ENCODE measurements at regions of chr6 and their contacts with region 1.

Region 1: DNA sequence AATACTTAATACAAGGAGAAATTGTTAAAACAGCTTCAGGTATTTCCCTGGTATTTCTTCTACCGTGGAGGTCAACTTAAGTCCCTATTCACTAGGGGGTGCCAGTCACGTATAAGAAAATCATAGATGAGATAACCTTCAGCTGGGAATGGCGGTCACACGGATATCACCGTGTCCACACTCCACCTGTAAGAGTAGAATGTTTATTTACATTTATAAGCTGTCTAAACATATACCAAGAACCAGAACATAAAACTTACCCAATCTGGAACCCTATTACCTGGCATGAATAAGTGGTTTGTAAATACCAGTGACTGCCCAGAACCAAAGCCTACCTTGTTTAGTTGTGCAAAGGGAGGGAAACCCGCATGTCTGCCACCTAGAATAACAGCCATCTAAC is 1.9 kb upstream of the ELOVL4 start:
- DNase-seq: peak; percentile 54 to 69 (median 63)
- H3K4me3 ChIP-seq: no peak overlapping the region
- H3K4me3 Mint-ChIP-seq: peak overlapping the region in 5 of 8 donors; percentile 12 to 64 (median 30)
- H3K27ac ChIP-seq: no peak overlapping the region
- H3K27ac Mint-ChIP-seq: peak overlapping the region in 4 of 7 donors; percentile 43 to 86 (median 60)
- H3K4me1 ChIP-seq: peaks cover 36% of the 10 kb centered on the region
- H3K4me1 Mint-ChIP-seq: peaks cover 17 to 38% (median 21%) of the 10 kb centered on the region in 4 donors
- H3K27me3 ChIP-seq: peaks cover 12% of the 10 kb centered on the region
- H3K27me3 Mint-ChIP-seq: peaks cover 12 to 20% of the 10 kb centered on the region in 2 donors

Region 2: DNA sequence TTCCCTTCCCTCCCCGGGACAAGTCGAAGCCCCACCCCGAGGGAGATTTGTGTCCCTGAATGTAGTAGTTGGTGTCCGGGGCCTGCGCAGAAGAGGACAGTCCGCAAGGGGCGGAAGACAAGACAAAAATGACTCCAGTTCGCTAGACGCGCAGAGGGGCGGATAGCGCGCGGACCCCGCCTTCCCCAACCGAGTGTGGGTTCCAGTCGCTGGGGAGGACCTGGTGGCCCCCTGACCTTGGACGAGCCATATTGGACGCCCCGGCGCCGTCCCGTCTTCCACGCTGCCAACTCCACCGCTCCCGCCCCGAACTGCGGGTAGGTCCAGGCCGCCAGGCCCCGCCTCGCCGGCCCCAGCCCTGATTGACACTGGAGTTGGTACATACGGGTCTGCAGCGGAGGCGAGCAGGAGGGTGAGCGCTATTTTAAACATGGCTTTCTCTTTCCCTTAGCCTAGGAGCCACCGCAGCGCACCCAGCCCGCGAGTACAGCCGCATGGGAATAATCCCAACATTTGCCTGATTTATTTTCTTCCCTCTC is 715.6 kb before region 1 on chr6:
- CTCF ChIA-PET with region 1: no interaction called
- POLR2A ChIA-PET with region 1: no interaction called
- intact Hi-C with region 1: loop called (anchors 10 kb)
- DNase-seq: peak; percentile 58 to 71 (median 64)
- H3K4me3 ChIP-seq: peak overlapping the region; percentile 77 to 99
- H3K4me3 Mint-ChIP-seq: peak overlapping the region; percentile 92 to 99 (median 98)
- H3K27ac ChIP-seq: peak overlapping the region; percentile 72
- H3K27ac Mint-ChIP-seq: peak overlapping the region; percentile 85 to 96 (median 92)
- H3K4me1 ChIP-seq: peaks cover 20% of the 10 kb centered on the region
- H3K4me1 Mint-ChIP-seq: peaks cover 14 to 30% (median 16%) of the 10 kb centered on the region in 4 donors
- H3K27me3 ChIP-seq: no peaks in the 10 kb centered on the region
- H3K27me3 Mint-ChIP-seq: no peaks in the 10 kb centered on the region

Region 3: GRCh38 chr6:79964607-79965081 is 15.4 kb after region 1 on chr6:
- CTCF ChIA-PET with region 1: interaction called, 12 read pairs
- POLR2A ChIA-PET with region 1: interaction called, 9 read pairs
- intact Hi-C with region 1: no loop called
- DNase-seq: peak; percentile 54 to 74 (median 70)
- H3K4me3 ChIP-seq: no peak overlapping the region
- H3K4me3 Mint-ChIP-seq: peak overlapping the region in 7 of 8 donors; percentile 9 to 67 (median 47)
- H3K27ac ChIP-seq: no peak overlapping the region
- H3K27ac Mint-ChIP-seq: peak overlapping the region; percentile 76 to 92 (median 85)
- H3K4me1 ChIP-seq: peaks cover 22% of the 10 kb centered on the region
- H3K4me1 Mint-ChIP-seq: peaks cover 3 to 31% (median 13%) of the 10 kb centered on the region in 4 donors
- H3K27me3 ChIP-seq: no peaks in the 10 kb centered on the region
- H3K27me3 Mint-ChIP-seq: peaks cover 7 to 14% of the 10 kb centered on the region in 2 donors

Region 4: GRCh38 chr6:79984261-79984660 is 35.0 kb after region 1 on chr6:
- CTCF ChIA-PET with region 1: interaction called, 38 read pairs
- POLR2A ChIA-PET with region 1: interaction called, 14 read pairs
- intact Hi-C with region 1: loop called (anchors 1 kb)
- DNase-seq: peak; percentile 28 to 50 (median 43)
- H3K4me3 ChIP-seq: no peak overlapping the region
- H3K4me3 Mint-ChIP-seq: peak overlapping the region in 4 of 8 donors; percentile 5 to 33 (median 20)
- H3K27ac ChIP-seq: no peak overlapping the region
- H3K27ac Mint-ChIP-seq: peak overlapping the region; percentile 3 to 69 (median 36)
- H3K4me1 ChIP-seq: peaks cover 25% of the 10 kb centered on the region
- H3K4me1 Mint-ChIP-seq: peaks cover 4 to 30% (median 14%) of the 10 kb centered on the region in 4 donors
- H3K27me3 ChIP-seq: no peaks in the 10 kb centered on the region
- H3K27me3 Mint-ChIP-seq: no peaks in the 10 kb centered on the region

Region 5: GRCh38 chr6:80004173-80005072 is 55.2 kb after region 1 on chr6 and contains the start of gene TTK:
- CTCF ChIA-PET with region 1: interaction called, 24 read pairs
- POLR2A ChIA-PET with region 1: interaction called, 18 read pairs
- intact Hi-C with region 1: loop called (anchors 1 kb)
- DNase-seq: peak; percentile 93 to 96 (median 94)
- H3K4me3 ChIP-seq: peak within 1 kb of the TSS; percentile 42 to 95
- H3K4me3 Mint-ChIP-seq: peak within 1 kb of the TSS; percentile 88 to 97 (median 94)
- H3K27ac ChIP-seq: peak within 1 kb of the TSS; percentile 81
- H3K27ac Mint-ChIP-seq: peak within 1 kb of the TSS; percentile 89 to 99 (median 98)
- H3K4me1 ChIP-seq: peaks cover 25% of the 10 kb centered on the region
- H3K4me1 Mint-ChIP-seq: peaks cover 15 to 25% (median 20%) of the 10 kb centered on the region in 4 donors
- H3K27me3 ChIP-seq: no peaks in the 10 kb centered on the region
- H3K27me3 Mint-ChIP-seq: peaks cover 2 to 3% of the 10 kb centered on the region in 2 donors
- total RNA-seq, gene TTK: 0.61 to 0.87 TPM

Region 6: DNA sequence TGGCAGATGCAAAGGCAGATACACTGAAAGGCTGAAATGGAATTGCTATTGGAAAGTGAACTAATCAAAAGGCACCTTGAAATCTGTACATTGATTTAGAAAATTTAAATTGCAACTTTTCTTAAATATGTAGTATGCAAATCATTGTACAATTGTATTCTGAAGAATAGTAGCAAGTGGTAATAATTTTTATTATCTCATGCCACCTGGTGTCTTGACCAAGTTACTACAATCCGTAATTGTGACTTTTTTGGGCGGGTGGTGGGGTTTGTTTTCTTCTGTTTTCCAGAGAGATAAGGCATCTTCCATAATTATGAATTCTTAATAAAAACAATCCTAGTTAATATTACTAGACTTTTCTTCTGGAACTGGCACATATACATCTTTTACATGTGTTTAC is 144.8 kb after region 1 on chr6:
- CTCF ChIA-PET with region 1: interaction called, 62 read pairs
- POLR2A ChIA-PET with region 1: no interaction called
- intact Hi-C with region 1: loop called (anchors 1 kb)
- DNase-seq: peak in 4 of 5 donors; percentile 33 to 46 (median 38)
- H3K4me3 ChIP-seq: no peak overlapping the region
- H3K4me3 Mint-ChIP-seq: no peak overlapping the region
- H3K27ac ChIP-seq: no peak overlapping the region
- H3K27ac Mint-ChIP-seq: no peak overlapping the region
- H3K4me1 ChIP-seq: no peaks in the 10 kb centered on the region
- H3K4me1 Mint-ChIP-seq: peaks cover 0 to 5% (median 0%) of the 10 kb centered on the region in 4 donors
- H3K27me3 ChIP-seq: no peaks in the 10 kb centered on the region
- H3K27me3 Mint-ChIP-seq: peaks cover under 1 to 7% of the 10 kb centered on the region in 2 donors

Region 7: DNA sequence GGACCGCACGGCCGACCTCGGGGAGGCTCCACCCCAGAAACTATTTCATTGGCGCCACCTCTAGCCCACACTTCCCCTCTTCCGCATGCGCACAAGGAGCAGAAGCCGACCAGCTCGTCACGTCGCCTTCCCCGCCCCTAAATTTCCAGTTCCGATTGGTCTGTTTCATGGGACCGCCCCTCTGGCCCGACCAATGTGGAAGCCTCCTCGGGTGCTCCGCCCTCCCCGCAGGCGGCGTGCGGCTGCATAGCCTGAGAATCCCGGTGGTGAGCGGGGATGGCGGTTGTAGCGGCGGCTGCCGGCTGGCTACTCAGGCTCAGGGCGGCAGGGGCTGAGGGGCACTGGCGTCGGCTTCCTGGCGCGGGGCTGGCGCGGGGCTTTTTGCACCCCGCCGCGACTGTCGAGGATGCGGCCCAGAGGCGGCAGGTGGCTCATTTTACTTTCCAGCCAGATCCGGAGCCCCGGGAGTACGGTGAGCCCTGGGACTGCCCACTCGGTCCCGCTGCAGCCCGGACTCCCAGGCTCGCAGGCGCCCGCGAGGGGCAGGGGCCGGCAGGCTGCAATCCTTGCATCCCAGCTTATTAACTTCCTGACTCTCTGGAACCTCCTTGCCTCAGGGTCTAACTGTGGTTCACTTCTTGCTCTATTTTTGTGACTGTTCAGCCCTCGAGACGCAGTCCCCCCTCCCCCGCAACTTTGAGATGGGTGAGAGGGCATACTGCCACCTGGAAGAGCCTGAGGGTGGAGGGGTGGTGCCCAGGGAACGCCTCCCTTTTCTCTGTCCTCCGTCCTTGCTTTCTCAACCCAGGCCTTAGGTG is 157.4 kb after region 1 on chr6 and contains the start of gene BCKDHB:
- CTCF ChIA-PET with region 1: interaction called, 13 read pairs
- POLR2A ChIA-PET with region 1: interaction called, 7 read pairs
- intact Hi-C with region 1: no loop called
- DNase-seq: peak; percentile 98 to 99 (median 98)
- H3K4me3 ChIP-seq: peak within 1 kb of the TSS; percentile 52 to 54
- H3K4me3 Mint-ChIP-seq: peak within 1 kb of the TSS; percentile 87 to 95 (median 92)
- H3K27ac ChIP-seq: peak within 1 kb of the TSS; percentile 50
- H3K27ac Mint-ChIP-seq: peak within 1 kb of the TSS; percentile 76 to 95 (median 92)
- H3K4me1 ChIP-seq: peaks cover 16% of the 10 kb centered on the region
- H3K4me1 Mint-ChIP-seq: peaks cover 12 to 22% (median 18%) of the 10 kb centered on the region in 4 donors
- H3K27me3 ChIP-seq: no peaks in the 10 kb centered on the region
- H3K27me3 Mint-ChIP-seq: peaks cover 1 to 3% of the 10 kb centered on the region in 2 donors
- total RNA-seq, gene BCKDHB: 11.8 to 16.0 TPM

Region 8: GRCh38 chr6:80182291-80182690 is 233.1 kb after region 1 on chr6:
- CTCF ChIA-PET with region 1: no interaction called
- POLR2A ChIA-PET with region 1: no interaction called
- intact Hi-C with region 1: no loop called
- DNase-seq: no peak
- H3K4me3 ChIP-seq: no peak overlapping the region
- H3K4me3 Mint-ChIP-seq: no peak overlapping the region
- H3K27ac ChIP-seq: no peak overlapping the region
- H3K27ac Mint-ChIP-seq: no peak overlapping the region
- H3K4me1 ChIP-seq: no peaks in the 10 kb centered on the region
- H3K4me1 Mint-ChIP-seq: no peaks in the 10 kb centered on the region
- H3K27me3 ChIP-seq: no peaks in the 10 kb centered on the region
- H3K27me3 Mint-ChIP-seq: no peaks in the 10 kb centered on the region

Measured in CD4-positive, alpha-beta memory T cell (primary cell).